Endothelial cell of umbilical vein (primary cell): ENCODE measurements at regions of chr16 and their contacts with region 1.

Region 1: GRCh38 chr16:72241930-72242329 is 70.0 kb upstream of the PMFBP1 start:
- DNase-seq: peak; percentile 66
- H3K4me3 ChIP-seq: no peak overlapping the region
- H3K27ac ChIP-seq: no peak overlapping the region
- H3K4me1 ChIP-seq: no peaks in the 10 kb centered on the region
- H3K27me3 ChIP-seq: no peaks in the 10 kb centered on the region
- CTCF ChIP-seq: peak; percentile 79 to 85
- POLR2A ChIP-seq: no peak

Region 2: DNA sequence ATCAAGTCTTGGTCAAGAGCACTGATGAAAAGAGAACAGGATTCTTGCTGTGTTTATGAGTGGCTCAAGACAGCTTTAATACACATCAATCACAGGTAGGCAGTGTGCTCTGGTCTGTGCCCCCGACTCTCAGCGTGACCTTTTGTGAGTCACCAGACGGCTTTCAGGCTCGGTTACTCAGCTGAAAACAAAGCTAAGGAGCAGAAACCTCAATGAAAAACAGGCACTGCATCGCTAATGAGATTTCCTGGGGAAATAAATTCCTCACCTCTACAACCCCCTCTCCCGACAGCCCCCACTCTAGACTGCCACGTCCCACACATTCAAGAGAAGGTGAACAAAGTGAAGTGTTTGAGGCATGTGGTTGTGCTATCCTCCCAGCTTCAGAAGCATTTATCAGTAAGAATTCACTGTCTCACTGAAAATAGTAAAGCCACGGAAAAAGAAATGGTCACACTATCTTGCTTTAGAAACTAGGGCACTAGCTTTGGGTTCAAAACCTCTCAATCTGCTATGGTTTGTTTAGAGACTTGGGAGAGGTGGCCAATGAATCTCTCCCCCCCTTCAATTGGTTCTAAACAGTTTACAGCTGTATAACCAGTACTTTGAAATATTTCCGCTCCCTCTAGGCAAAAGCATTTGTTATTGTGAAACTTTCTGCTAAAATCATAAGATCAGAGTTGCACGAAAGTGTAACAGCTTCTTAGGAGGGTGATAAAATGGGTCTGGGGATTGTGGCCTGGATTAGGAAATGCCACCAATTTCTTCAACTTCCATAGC is 129.6 kb after region 1 on chr16:
- CTCF ChIA-PET with region 1: interaction called, 4 read pairs
- POLR2A ChIA-PET with region 1: no interaction called
- dilution Hi-C with region 1: no loop called
- intact Hi-C with region 1: loop called (anchors 2 kb)
- DNase-seq: peak; percentile 97
- H3K4me3 ChIP-seq: no peak overlapping the region
- H3K27ac ChIP-seq: peak overlapping the region; percentile 71
- H3K4me1 ChIP-seq: peaks cover 21% of the 10 kb centered on the region
- H3K27me3 ChIP-seq: no peaks in the 10 kb centered on the region
- CTCF ChIP-seq: no peak
- POLR2A ChIP-seq: peak; percentile 33

Region 3: DNA sequence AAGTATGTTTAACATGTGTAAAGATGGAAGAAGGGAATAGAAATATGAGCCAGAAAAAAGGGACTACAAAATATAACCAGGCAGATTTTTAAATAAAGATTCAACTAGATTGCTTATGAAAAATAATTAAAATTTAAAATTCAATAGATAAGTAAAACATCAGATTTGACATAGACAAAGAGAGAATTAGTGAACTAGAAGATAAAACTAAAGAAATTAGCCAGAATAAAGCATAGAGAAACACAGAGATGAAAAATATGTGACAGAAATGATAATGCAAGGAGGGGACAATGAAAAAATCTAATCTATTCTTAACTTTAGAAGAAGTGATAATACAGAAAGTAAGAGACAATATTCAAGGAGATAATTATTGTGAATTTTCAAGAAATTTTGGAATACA is 152.6 kb after region 1 on chr16:
- CTCF ChIA-PET with region 1: no interaction called
- POLR2A ChIA-PET with region 1: no interaction called
- dilution Hi-C with region 1: no loop called
- intact Hi-C with region 1: no loop called
- DNase-seq: no peak
- H3K4me3 ChIP-seq: no peak overlapping the region
- H3K27ac ChIP-seq: no peak overlapping the region
- H3K4me1 ChIP-seq: no peaks in the 10 kb centered on the region
- H3K27me3 ChIP-seq: no peaks in the 10 kb centered on the region
- CTCF ChIP-seq: no peak
- POLR2A ChIP-seq: no peak

Region 4: DNA sequence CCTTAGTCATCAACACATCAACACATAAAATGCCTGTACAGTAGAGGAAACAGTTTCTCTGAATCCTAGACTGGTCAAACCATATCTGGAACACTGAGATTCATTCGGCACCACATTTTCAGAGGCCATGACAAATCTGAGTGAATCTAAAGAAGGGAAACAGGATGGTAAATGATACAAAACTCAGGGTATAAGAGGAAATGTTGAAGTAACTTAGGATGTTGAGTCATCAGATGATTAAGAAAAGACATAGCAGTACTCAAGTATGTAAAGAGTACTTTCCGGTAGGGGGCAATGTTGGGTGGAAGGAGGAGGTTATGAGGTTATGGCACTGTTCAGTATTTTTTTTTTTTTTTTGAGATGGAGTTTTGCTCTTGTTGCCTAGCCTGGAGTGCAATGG is 288.5 kb after region 1 on chr16:
- CTCF ChIA-PET with region 1: no interaction called
- POLR2A ChIA-PET with region 1: no interaction called
- dilution Hi-C with region 1: no loop called
- intact Hi-C with region 1: loop called (anchors 1 kb)
- DNase-seq: peak; percentile 82
- H3K4me3 ChIP-seq: no peak overlapping the region
- H3K27ac ChIP-seq: peak overlapping the region; percentile 68
- H3K4me1 ChIP-seq: peaks cover 11% of the 10 kb centered on the region
- H3K27me3 ChIP-seq: no peaks in the 10 kb centered on the region
- CTCF ChIP-seq: peak; percentile 35 to 46
- POLR2A ChIP-seq: no peak

Region 5: GRCh38 chr16:72787514-72788268 is 545.8 kb after region 1 on chr16:
- CTCF ChIA-PET with region 1: no interaction called
- POLR2A ChIA-PET with region 1: no interaction called
- dilution Hi-C with region 1: no loop called
- intact Hi-C with region 1: loop called (anchors 10 kb)
- DNase-seq: peak; percentile 86
- H3K4me3 ChIP-seq: peak overlapping the region; percentile 27 to 57 (median 55)
- H3K27ac ChIP-seq: peak overlapping the region; percentile 95
- H3K4me1 ChIP-seq: peaks cover 7% of the 10 kb centered on the region
- H3K27me3 ChIP-seq: no peaks in the 10 kb centered on the region
- CTCF ChIP-seq: no peak
- POLR2A ChIP-seq: no peak

Region 6: DNA sequence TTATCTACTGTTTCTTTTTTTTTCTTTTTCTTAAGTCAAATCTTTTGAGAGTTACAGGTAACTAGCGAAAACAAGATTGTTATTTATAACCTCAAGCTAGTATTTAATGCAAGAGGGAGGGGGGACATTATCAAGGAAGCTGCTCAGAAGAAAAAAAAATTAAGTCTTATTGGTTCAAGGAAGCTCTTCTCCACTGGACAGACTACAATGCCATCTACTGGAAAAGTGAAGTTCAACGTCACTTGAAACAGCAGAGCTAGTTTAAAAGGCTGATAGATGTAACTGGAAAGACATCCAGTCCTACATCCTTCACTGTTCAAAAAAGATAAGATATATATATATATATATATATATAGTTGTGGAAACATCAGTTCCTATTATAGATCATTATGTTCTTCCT is 1636.7 kb after region 1 on chr16:
- CTCF ChIA-PET with region 1: interaction called, 11 read pairs
- POLR2A ChIA-PET with region 1: no interaction called
- dilution Hi-C with region 1: no loop called
- intact Hi-C with region 1: loop called (anchors 1 kb)
- DNase-seq: peak; percentile 65
- H3K4me3 ChIP-seq: no peak overlapping the region
- H3K27ac ChIP-seq: no peak overlapping the region
- H3K4me1 ChIP-seq: no peaks in the 10 kb centered on the region
- H3K27me3 ChIP-seq: no peaks in the 10 kb centered on the region
- CTCF ChIP-seq: peak in 1 of 2 donors; percentile 34
- POLR2A ChIP-seq: no peak